ENCODE measurements at regions of chr18 and their contacts with region 1.

Region 1: GRCh38 chr18:46148810-46149209 is 44.6 kb downstream of the HAUS1 start:
- DNase-seq: peak in 1 of 2 donors; percentile 53
- ATAC-seq: no peak
- H3K4me3 ChIP-seq: no peak overlapping the region
- H3K27ac ChIP-seq: peak overlapping the region in 2 of 4 donors; percentile 26 to 36
- H3K4me1 ChIP-seq: peaks cover 21 to 22% of the 10 kb centered on the region in 2 donors
- H3K27me3 ChIP-seq: no peaks in the 10 kb centered on the region
- CTCF ChIP-seq: peak; percentile 56 to 82 (median 77)
- POLR2A ChIP-seq: no peak

Region 2: DNA sequence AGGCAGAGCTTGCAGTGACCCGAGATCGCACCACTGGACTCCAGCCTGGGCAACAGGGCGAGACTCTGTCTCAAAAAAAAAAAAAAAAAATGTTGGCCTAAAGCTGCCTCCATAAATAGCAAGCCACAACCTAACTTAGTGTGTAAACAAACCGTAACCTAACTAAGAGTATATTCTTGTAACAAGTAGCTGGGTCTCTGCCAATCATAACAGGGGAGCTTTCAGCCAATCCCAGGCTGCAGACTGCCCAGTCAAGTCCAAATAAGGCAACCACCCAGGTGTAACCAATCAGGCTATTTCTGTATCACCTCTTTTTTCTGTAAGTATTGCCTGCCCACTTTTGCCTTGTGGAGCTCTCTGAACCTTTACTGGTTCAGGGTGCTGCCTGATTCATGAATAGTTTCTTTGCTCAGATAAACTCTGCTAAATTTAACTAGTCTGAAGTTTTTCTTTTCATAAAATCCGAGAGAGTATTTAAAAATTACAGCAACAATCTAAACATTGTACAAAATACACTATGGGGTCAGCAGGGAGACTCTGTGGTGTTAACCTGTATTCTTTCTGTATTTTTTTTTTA is 81.3 kb before region 1 on chr18:
- in situ Hi-C with region 1: no loop called
- intact Hi-C with region 1: no loop called
- DNase-seq: peak; percentile 48 to 77
- ATAC-seq: peak; percentile 89 to 94
- H3K4me3 ChIP-seq: no peak overlapping the region
- H3K27ac ChIP-seq: peak overlapping the region; percentile 17 to 74 (median 58)
- H3K4me1 ChIP-seq: peaks cover 9 to 12% of the 10 kb centered on the region in 2 donors
- H3K27me3 ChIP-seq: no peaks in the 10 kb centered on the region
- CTCF ChIP-seq: no peak
- POLR2A ChIP-seq: peak in 1 of 2 donors; percentile 43

Region 3: GRCh38 chr18:46080156-46080555 is 68.7 kb before region 1 on chr18:
- in situ Hi-C with region 1: no loop called
- intact Hi-C with region 1: no loop called
- DNase-seq: no peak
- ATAC-seq: no peak
- H3K4me3 ChIP-seq: no peak overlapping the region
- H3K27ac ChIP-seq: no peak overlapping the region
- H3K4me1 ChIP-seq: no peaks in the 10 kb centered on the region
- H3K27me3 ChIP-seq: no peaks in the 10 kb centered on the region
- CTCF ChIP-seq: no peak
- POLR2A ChIP-seq: no peak

Region 4: DNA sequence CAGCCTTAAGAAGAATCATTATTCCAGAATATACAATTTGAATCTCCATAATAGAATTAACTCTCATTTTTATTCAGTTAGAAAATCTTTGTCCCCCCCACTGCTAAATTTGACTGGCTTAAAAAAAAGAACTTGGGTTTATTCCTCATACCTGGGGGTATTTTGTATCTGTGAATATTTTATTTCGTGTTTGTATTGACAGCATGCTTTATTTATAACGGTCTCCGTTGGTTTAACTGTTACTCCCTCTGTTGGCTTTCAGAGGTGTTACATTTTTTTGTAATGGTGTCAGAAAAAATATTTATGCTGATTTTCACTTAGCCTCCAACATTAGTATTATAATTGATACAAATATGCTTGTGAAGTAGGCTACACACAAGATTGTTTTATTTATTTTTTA is 64.5 kb after region 1 on chr18:
- in situ Hi-C with region 1: no loop called
- intact Hi-C with region 1: loop called (anchors 5 kb)
- DNase-seq: no peak
- ATAC-seq: peak; percentile 28 to 59
- H3K4me3 ChIP-seq: no peak overlapping the region
- H3K27ac ChIP-seq: peak overlapping the region in 2 of 4 donors; percentile 28 to 46
- H3K4me1 ChIP-seq: peaks cover 22 to 26% of the 10 kb centered on the region in 2 donors
- H3K27me3 ChIP-seq: no peaks in the 10 kb centered on the region
- CTCF ChIP-seq: peak; percentile 29 to 59 (median 42)
- POLR2A ChIP-seq: no peak

Region 5: GRCh38 chr18:46518438-46518837 is 369.6 kb after region 1 on chr18:
- in situ Hi-C with region 1: loop called in 1 of 4 experiments (anchors 25 kb)
- intact Hi-C with region 1: loop called (anchors 5 kb)
- DNase-seq: peak; percentile 12 to 54
- ATAC-seq: peak; percentile 83
- H3K4me3 ChIP-seq: no peak overlapping the region
- H3K27ac ChIP-seq: no peak overlapping the region
- H3K4me1 ChIP-seq: no peaks in the 10 kb centered on the region
- H3K27me3 ChIP-seq: no peaks in the 10 kb centered on the region
- CTCF ChIP-seq: peak; percentile 27 to 63 (median 51)
- POLR2A ChIP-seq: no peak

Region 6: GRCh38 chr18:46660955-46661749 is 512.3 kb after region 1 on chr18:
- in situ Hi-C with region 1: loop called in 3 of 4 experiments (anchors 5 to 10 kb)
- intact Hi-C with region 1: loop called (anchors 1 kb)
- DNase-seq: peak in 1 of 2 donors; percentile 28
- ATAC-seq: peak; percentile 57 to 67
- H3K4me3 ChIP-seq: no peak overlapping the region
- H3K27ac ChIP-seq: peak overlapping the region in 1 of 4 donors; percentile 8
- H3K4me1 ChIP-seq: peaks cover 0 to 4% of the 10 kb centered on the region in 2 donors
- H3K27me3 ChIP-seq: no peaks in the 10 kb centered on the region
- CTCF ChIP-seq: no peak
- POLR2A ChIP-seq: no peak